GM23248 (cell line): ENCODE measurements at regions of chr2 and their contacts with region 1.

Region 1: GRCh38 chr2:215949991-215950404 is 63.4 kb downstream of the MREG start:
- DNase-seq: peak; percentile 72
- H3K4me3 ChIP-seq: no peak overlapping the region
- H3K27ac ChIP-seq: no peak overlapping the region
- H3K4me1 ChIP-seq: no peaks in the 10 kb centered on the region
- H3K27me3 ChIP-seq: no peaks in the 10 kb centered on the region

Region 2: GRCh38 chr2:215717501-215718381 is 232.3 kb before region 1 on chr2:
- in situ Hi-C with region 1: no loop called
- DNase-seq: peak; percentile 32
- H3K4me3 ChIP-seq: peak overlapping the region; percentile 24
- H3K27ac ChIP-seq: peak overlapping the region; percentile 80
- H3K4me1 ChIP-seq: peaks cover 50% of the 10 kb centered on the region
- H3K27me3 ChIP-seq: no peaks in the 10 kb centered on the region

Region 3: GRCh38 chr2:216023055-216023648 is 73.2 kb after region 1 on chr2:
- in situ Hi-C with region 1: loop called (anchors 5 kb)
- DNase-seq: peak; percentile 68
- H3K4me3 ChIP-seq: no peak overlapping the region
- H3K27ac ChIP-seq: no peak overlapping the region
- H3K4me1 ChIP-seq: no peaks in the 10 kb centered on the region
- H3K27me3 ChIP-seq: no peaks in the 10 kb centered on the region